BJ (cell line): ENCODE measurements at regions of chr17 and their contacts with region 1.

Region 1: GRCh38 chr17:43940630-43941029 is 1.6 kb downstream of the PPY start:
- DNase-seq: no peak
- H3K4me3 ChIP-seq: no peak overlapping the region
- H3K27me3 ChIP-seq: peaks cover 8% of the 10 kb centered on the region; the same call in 1 of the 2 replicates
- CTCF ChIP-seq: peak; percentile 73

Region 2: DNA sequence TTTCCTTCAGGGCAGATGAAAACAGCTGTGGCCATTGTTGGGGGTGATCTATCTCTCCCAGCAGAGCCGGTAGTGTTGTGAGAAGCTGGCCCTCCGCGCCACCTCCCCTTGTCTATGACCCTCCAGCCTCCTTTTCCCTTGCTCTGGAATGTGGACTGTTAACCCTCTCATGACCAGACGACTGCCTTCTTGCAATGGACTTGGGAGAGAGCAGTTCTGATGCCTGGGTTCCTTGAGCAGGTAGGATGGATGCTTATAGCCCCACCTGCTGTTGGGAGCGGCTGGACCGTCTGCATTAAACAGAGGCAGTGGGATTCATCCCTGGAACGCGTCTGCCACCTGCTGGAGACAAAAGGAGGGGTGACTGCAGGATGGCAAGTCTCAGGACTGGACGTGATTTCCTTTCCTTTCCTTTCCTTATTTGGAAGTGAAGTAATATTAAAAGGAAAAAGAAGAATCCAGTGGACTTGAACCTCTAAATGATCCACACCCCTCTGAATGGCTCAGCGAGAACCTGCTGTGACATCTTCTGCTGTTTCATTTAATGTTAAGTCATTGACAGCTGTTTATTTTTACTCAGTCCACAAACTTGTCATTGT is 180.3 kb before region 1 on chr17:
- CTCF ChIA-PET with region 1: no interaction called
- POLR2A ChIA-PET with region 1: no interaction called
- DNase-seq: peak; percentile 50
- H3K4me3 ChIP-seq: no peak overlapping the region
- H3K27me3 ChIP-seq: peaks cover 18% of the 10 kb centered on the region
- CTCF ChIP-seq: peak; percentile 99

Region 3: DNA sequence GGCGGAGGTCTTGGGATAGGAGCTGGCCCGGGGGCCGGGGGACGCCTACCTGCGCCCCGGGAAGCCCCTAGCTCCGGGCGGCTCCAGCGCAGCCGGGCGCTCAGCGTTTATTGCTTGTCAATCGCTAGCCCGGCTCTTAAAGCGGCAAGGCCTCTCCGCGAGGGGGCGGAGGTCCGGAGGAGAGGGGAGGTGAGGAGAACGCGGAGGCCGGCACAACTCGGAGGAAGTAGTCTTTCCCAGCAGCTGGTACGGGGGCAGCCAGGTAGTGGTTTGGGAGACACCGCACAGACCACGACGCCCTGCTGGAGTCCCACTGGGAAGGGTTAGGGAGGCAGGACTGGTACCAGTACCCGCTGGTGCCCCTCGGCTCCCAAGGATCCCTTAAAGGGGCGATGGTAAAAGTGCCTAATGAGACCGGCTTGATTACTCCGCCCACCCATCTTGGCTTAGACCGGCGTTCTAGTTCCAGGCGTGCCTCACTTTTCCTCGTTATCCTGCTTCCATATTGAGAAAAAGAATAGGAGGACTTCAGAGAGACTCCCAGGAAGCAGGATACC is 33.1 kb before region 1 on chr17 and contains the start of gene MPP2:
- CTCF ChIA-PET with region 1: interaction called, 27 read pairs
- POLR2A ChIA-PET with region 1: no interaction called
- DNase-seq: no peak
- H3K4me3 ChIP-seq: peak within 1 kb of the TSS; percentile 51
- H3K27me3 ChIP-seq: peaks cover 4% of the 10 kb centered on the region
- CTCF ChIP-seq: peak; percentile 41; the same call in 1 of the 2 replicates
- polyA plus RNA-seq, gene MPP2: 3.1 and 5.3 TPM in 2 replicates

Region 4: DNA sequence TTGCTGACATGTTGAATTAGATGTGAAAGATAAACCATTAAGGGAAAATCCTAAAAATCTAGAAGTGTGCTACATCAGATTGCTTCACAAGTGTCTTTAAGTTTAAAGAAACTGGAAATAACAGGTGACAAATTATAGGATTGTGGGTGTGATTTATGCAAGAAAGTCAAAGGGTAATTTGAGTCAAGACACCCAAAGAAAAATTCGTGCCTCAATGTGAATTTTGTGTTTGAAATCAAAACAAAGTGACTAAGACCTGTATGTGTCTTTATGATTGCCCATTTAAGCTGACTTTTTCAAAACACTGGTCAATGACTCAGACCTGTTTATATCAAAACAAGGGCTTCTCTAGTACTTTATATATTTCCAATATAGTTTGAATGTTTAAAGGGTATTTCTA is 18.3 kb after region 1 on chr17:
- CTCF ChIA-PET with region 1: interaction called, 22 read pairs
- POLR2A ChIA-PET with region 1: no interaction called
- DNase-seq: no peak
- H3K4me3 ChIP-seq: no peak overlapping the region
- H3K27me3 ChIP-seq: peaks cover 15% of the 10 kb centered on the region
- CTCF ChIP-seq: no peak

Region 5: DNA sequence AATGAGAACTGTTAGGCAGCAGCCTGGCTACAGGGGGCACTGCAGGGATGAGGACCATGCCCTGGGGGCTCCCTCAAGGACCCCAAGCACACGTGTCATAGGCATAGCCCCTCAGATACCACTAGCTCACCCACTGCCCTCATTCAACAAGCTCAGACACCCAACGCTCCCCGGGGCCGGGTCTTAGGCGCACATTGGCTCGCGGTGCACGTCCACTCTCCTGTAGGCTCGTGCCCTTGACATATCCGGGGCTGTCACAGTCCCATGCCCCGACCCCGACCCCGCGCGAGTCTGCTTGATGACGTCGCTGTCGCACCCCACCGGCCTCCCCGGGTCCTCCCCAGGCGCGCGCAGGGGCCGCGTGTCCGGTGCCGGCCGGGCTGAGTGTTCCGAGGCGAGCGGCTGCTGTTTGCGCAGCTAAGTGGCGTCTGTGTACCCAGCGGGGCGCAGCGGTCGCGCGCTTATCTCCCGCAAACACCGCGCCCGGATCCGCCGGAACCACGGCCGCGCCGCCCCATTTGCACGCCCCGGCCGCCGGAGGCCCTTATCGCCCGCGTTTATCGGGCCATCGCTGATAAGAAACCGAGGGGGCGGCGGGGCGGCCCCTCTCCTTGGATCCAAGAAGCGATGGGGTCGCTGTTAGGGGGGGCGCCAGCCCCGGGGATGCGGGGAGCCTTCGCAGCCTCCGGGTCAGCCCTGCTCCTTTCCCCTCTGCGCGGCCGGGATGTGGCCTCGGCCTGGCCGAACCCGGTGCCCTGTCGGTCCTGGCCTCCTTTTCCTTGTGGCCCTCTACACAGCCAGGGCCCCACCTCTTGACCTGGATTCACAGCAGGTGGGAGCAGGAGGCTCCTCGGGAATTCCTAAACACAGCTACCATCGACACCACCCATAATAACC is 43.1 kb after region 1 on chr17:
- CTCF ChIA-PET with region 1: interaction called, 10 read pairs
- POLR2A ChIA-PET with region 1: no interaction called
- DNase-seq: no peak
- H3K4me3 ChIP-seq: peak overlapping the region; percentile 27
- H3K27me3 ChIP-seq: peaks cover 22% of the 10 kb centered on the region
- CTCF ChIP-seq: peak; percentile 42

Region 6: DNA sequence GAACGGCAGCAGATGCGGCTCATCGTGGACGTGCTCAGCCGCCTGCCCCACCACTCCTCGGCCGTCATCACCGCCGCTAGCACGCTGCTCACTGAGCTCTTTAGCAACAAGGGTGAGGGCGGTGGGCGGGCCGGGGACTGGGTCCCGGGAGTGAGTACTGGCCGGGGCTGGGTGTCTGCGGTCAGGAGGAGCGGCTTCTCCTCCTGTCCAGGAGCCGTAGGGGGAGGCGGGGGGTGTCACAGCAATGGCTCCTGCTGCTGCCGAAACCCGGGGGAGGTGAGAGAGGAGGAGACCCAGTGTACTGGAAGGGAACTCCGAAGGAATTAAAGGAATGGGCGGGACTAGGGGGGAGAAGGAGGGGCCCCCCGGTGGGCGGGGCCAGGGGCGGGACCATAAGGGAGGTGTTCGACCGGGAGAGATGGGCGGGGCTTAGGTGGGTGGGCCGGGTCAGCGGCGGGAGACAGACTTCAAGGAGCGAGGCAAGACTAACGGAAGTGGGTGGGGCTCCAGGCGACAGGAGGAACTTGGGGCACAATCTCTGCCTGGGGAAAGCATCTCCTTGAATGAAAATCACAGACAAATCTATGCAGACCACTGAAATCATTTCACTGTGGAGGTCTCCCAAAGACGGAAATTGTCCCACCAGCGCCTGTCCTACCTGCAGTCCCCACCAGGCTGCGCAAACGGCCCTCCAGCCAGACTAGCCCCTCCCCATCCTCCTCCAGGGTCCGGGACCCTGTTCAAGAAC is 66.1 kb after region 1 on chr17:
- CTCF ChIA-PET with region 1: interaction called, 10 read pairs
- POLR2A ChIA-PET with region 1: no interaction called
- DNase-seq: peak; percentile 79
- H3K4me3 ChIP-seq: peak overlapping the region; percentile 65
- H3K27me3 ChIP-seq: 0 out of 2 replicates have a peak, but pooled peaks cover 1% of the 10 kb centered on the region
- CTCF ChIP-seq: peak; percentile 72